ENCODE measurements at regions of chr10 and their contacts with region 1.

Region 1: GRCh38 chr10:111076191-111076681 is 593 bp upstream of the ADRA2A start:
- DNase-seq: peak; percentile 13
- ATAC-seq: peak; percentile 96
- H3K4me3 ChIP-seq: no peak overlapping the region
- H3K27ac ChIP-seq: no peak overlapping the region
- H3K4me1 ChIP-seq: no peaks in the 10 kb centered on the region; a peak in 1 of 4 replicates
- H3K27me3 ChIP-seq: peaks cover 36% of the 10 kb centered on the region; the same call in 1 of the 2 replicates
- CTCF ChIP-seq: peak; percentile 84 to 94 (median 85)
- POLR2A ChIP-seq: no peak
- RAD21 ChIP-seq: peak; percentile 93

Region 2: GRCh38 chr10:111360260-111360925 is 284.2 kb after region 1 on chr10:
- CTCF ChIA-PET with region 1: no interaction called
- POLR2A ChIA-PET with region 1: no interaction called
- RAD21 ChIA-PET with region 1: no interaction called
- intact Hi-C with region 1: loop called (anchors 1 kb)
- DNase-seq: peak; percentile 64
- ATAC-seq: peak; percentile 99
- H3K4me3 ChIP-seq: no peak overlapping the region
- H3K27ac ChIP-seq: no peak overlapping the region
- H3K4me1 ChIP-seq: no peaks in the 10 kb centered on the region
- H3K27me3 ChIP-seq: peaks cover 49% of the 10 kb centered on the region
- CTCF ChIP-seq: peak; percentile 73 to 96 (median 78)
- POLR2A ChIP-seq: no peak
- RAD21 ChIP-seq: peak; percentile 93

Region 3: DNA sequence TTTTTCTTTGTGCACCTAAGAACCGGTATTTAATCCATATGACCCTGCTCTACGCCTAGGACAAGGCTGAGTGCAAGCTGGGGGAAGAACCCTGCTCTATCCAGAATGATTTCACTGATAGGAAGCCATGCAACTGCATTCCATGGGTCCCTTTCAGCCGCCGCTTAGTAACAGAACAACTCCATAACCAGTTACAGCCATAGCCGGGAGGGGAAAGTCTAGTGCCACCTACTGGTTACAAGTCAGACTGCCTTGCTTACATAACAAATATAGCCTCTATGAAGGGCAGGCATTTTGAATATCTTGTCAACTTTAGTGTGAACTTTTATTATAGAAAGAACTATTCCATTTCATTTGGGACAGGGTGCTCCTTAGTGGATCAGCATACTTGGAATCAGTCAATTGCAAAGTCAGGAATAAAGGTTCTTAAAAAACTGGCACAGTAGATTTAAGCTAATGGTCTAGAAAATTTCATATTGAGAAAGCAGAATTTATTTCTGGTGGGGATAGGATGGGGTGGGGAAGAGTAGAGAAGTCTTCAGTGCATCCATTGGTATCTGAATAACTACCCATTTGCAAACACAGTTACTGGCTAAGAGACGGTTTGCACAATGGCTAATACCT is 522.3 kb after region 1 on chr10:
- CTCF ChIA-PET with region 1: no interaction called
- POLR2A ChIA-PET with region 1: no interaction called
- RAD21 ChIA-PET with region 1: no interaction called
- intact Hi-C with region 1: loop called (anchors 5 kb)
- DNase-seq: peak; percentile 60
- ATAC-seq: peak; percentile 97
- H3K4me3 ChIP-seq: no peak overlapping the region
- H3K27ac ChIP-seq: no peak overlapping the region
- H3K4me1 ChIP-seq: no peaks in the 10 kb centered on the region
- H3K27me3 ChIP-seq: peaks cover 13% of the 10 kb centered on the region; the same call in 1 of the 2 replicates
- CTCF ChIP-seq: peak; percentile 65 to 98 (median 95); a peak in 5 of 6 replicates
- POLR2A ChIP-seq: no peak
- RAD21 ChIP-seq: peak; percentile 67

Region 4: DNA sequence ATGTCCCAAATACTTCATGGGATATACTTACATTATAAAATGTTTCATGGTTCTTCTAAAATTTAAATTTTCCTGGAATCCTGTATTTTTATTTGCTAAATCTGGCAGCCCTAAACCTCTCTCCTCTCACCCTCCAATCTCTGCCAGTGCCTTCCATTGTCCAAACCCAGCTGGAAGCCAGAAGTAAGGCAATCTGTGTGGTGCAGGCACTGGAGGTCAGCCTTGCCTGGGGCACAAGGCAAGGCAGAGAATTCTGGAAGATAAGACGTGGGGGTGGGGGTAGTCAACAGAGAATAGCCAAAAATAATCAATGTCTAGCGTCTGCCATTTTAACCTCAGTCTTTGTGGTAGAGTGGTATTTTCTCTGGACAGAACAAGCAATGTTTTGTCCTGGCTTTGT is 725.6 kb after region 1 on chr10:
- CTCF ChIA-PET with region 1: no interaction called
- POLR2A ChIA-PET with region 1: no interaction called
- RAD21 ChIA-PET with region 1: no interaction called
- intact Hi-C with region 1: no loop called
- DNase-seq: no peak
- ATAC-seq: no peak
- H3K4me3 ChIP-seq: no peak overlapping the region
- H3K27ac ChIP-seq: no peak overlapping the region
- H3K4me1 ChIP-seq: no peaks in the 10 kb centered on the region
- H3K27me3 ChIP-seq: peaks cover 66% of the 10 kb centered on the region
- CTCF ChIP-seq: no peak
- POLR2A ChIP-seq: no peak
- RAD21 ChIP-seq: no peak

Measured in HCT116 (cell line).